Caco-2 (cell line): ENCODE measurements at regions of chr11 and their contacts with region 1.

Region 1: DNA sequence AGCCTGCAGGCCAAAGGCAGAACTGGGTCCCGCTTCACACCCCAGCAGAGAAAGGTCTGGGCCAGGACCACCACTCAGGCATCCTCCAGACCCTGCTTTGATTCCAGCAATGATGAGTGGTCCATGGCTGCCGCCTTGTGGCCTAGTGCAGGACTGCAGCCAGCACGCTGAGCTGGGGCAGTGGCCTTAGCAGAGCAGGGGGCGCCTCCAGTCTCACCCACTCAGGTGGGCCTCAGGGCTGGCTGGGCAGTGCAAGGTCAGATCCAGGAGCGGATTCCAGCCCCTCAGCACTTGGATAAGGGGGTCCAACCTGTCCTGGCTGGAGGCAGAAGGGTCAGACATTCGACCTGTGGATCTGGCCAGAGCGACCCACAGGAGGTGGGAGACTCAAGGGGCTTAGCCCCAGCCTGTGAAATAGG is 9.6 kb upstream of the PDE2A start:
- DNase-seq: peak; percentile 76 to 89
- H3K4me3 ChIP-seq: no peak overlapping the region
- H3K4me3 Mint-ChIP-seq: no peak overlapping the region
- H3K27ac Mint-ChIP-seq: no peak overlapping the region
- H3K4me1 ChIP-seq: no peaks in the 10 kb centered on the region
- H3K4me1 Mint-ChIP-seq: peaks cover 6% of the 10 kb centered on the region
- H3K27me3 ChIP-seq: no peaks in the 10 kb centered on the region
- H3K27me3 Mint-ChIP-seq: peaks cover 9% of the 10 kb centered on the region
- CTCF ChIP-seq: peak; percentile 99

Region 2: GRCh38 chr11:72483412-72484186 is 200.2 kb before region 1 on chr11:
- CTCF ChIA-PET with region 1: interaction called, 3 read pairs
- POLR2A ChIA-PET with region 1: no interaction called
- intact Hi-C with region 1: loop called (anchors 1 kb)
- DNase-seq: no peak
- H3K4me3 ChIP-seq: no peak overlapping the region
- H3K4me3 Mint-ChIP-seq: no peak overlapping the region
- H3K27ac Mint-ChIP-seq: no peak overlapping the region
- H3K4me1 ChIP-seq: no peaks in the 10 kb centered on the region
- H3K4me1 Mint-ChIP-seq: peaks cover 16% of the 10 kb centered on the region
- H3K27me3 ChIP-seq: no peaks in the 10 kb centered on the region
- H3K27me3 Mint-ChIP-seq: no peaks in the 10 kb centered on the region
- CTCF ChIP-seq: no peak

Region 3: DNA sequence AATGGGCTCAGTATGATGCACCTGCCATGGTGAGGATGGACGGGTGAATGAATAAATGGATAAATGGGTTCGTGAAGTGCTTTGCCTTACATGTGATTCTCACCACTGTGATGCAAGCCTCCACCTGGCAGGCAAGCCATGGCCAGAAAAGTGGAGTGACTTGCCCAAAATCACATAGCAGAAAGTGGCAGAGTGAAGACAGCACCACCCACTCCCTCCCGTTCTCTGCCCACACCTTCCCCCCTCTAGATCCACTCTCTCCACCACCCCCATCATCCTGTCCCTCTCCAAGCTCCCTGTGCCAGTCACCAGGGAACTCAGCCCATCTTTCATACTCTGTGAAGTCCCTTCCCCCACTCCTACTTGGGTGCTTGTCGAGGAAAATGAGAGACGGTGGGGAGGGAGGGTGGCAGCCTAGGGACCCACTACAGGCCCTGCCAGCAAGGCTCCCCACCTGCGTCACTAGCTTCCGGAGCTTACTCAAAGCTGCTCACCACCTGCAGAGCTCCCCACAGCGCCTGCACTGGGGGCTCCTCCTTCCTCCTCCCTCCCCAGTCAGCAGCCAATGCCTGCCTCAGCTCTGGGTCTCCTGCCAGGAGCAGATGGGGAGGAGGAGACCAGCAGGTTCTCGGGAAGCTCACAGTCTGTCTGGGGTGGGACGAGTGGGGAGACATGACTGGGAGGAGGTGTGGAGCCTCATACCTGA is 91.9 kb before region 1 on chr11:
- CTCF ChIA-PET with region 1: interaction called, 28 read pairs
- POLR2A ChIA-PET with region 1: no interaction called
- intact Hi-C with region 1: no loop called
- DNase-seq: no peak
- H3K4me3 ChIP-seq: no peak overlapping the region
- H3K4me3 Mint-ChIP-seq: no peak overlapping the region
- H3K27ac Mint-ChIP-seq: no peak overlapping the region
- H3K4me1 ChIP-seq: no peaks in the 10 kb centered on the region
- H3K4me1 Mint-ChIP-seq: no peaks in the 10 kb centered on the region
- H3K27me3 ChIP-seq: peaks cover 8% of the 10 kb centered on the region
- H3K27me3 Mint-ChIP-seq: peaks cover 49% of the 10 kb centered on the region
- CTCF ChIP-seq: no peak

Region 4: DNA sequence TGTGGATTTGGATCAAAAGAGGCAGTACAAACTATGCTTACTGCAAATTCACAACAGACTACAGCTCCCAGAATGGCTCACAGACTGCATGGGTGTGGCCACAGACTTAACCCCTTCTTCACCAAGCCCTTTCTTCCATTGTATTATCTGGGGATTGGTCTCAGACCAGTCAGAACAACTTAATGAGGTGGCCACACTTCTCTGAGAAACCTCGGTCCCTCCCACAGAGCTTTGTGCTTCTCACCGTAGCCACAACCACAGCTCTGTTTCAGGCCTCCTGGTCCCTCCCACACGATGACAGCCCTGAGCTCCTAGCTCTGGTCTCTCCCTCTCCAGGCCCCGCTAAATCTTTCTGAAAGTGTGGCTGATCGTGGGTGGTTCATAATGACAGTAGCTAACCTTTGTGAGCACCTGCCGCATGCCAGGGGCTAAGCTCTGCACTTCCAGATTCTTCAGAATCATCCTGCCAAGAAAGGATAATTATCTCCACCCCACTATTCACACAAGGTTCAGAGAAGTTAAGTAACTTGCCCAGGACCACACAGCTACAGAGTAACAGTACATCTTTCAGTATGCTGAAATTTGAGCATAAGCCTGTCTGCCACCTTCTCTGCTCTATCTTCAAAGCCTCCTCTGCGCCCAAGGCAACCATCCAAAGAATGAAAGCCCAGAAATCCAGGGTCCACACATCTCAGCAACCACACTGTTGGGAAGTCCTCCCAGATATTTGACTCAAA is 15.0 kb before region 1 on chr11:
- CTCF ChIA-PET with region 1: interaction called, 15 read pairs
- POLR2A ChIA-PET with region 1: no interaction called
- intact Hi-C with region 1: no loop called
- DNase-seq: no peak
- H3K4me3 ChIP-seq: no peak overlapping the region
- H3K4me3 Mint-ChIP-seq: no peak overlapping the region
- H3K27ac Mint-ChIP-seq: no peak overlapping the region
- H3K4me1 ChIP-seq: no peaks in the 10 kb centered on the region
- H3K4me1 Mint-ChIP-seq: no peaks in the 10 kb centered on the region
- H3K27me3 ChIP-seq: no peaks in the 10 kb centered on the region; the same call in 1 of the 2 replicates
- H3K27me3 Mint-ChIP-seq: peaks cover 25% of the 10 kb centered on the region
- CTCF ChIP-seq: no peak

Region 5: GRCh38 chr11:72793425-72794367 is 109.9 kb after region 1 on chr11 and contains the start of gene STARD10:
- CTCF ChIA-PET with region 1: interaction called, 12 read pairs
- POLR2A ChIA-PET with region 1: no interaction called
- intact Hi-C with region 1: no loop called
- DNase-seq: peak; percentile 97 to 99
- H3K4me3 ChIP-seq: peak within 1 kb of the TSS; percentile 66
- H3K4me3 Mint-ChIP-seq: peak within 1 kb of the TSS; percentile 82
- H3K27ac Mint-ChIP-seq: peak within 1 kb of the TSS; percentile 91
- H3K4me1 ChIP-seq: peaks cover 26% of the 10 kb centered on the region
- H3K4me1 Mint-ChIP-seq: peaks cover 21% of the 10 kb centered on the region
- H3K27me3 ChIP-seq: no peaks in the 10 kb centered on the region
- H3K27me3 Mint-ChIP-seq: no peaks in the 10 kb centered on the region
- CTCF ChIP-seq: peak; percentile 99 to 100
- total RNA-seq, gene STARD10: 492 and 501 TPM in 2 replicates